Activated CD4-positive, alpha-beta memory T cell treated with anti-CD3 and anti-CD28 coated beads for 36 hours (primary cell): ENCODE measurements at regions of chr22 and their contacts with region 1.

Region 1: GRCh38 chr22:50474668-50475492 is at the start of gene SBF1:
- DNase-seq: peak; percentile 93
- H3K4me3 Mint-ChIP-seq: peak within 1 kb of the TSS; percentile 95
- H3K27ac Mint-ChIP-seq: peak within 1 kb of the TSS; percentile 78
- H3K4me1 Mint-ChIP-seq: peaks cover 47% of the 10 kb centered on the region
- H3K27me3 Mint-ChIP-seq: no peaks in the 10 kb centered on the region
- total RNA-seq, gene SBF1: 110 to 112 TPM

Region 2: GRCh38 chr22:50456466-50457234 is 18.2 kb before region 1 on chr22:
- CTCF ChIA-PET with region 1: interaction called, 12 read pairs
- POLR2A ChIA-PET with region 1: interaction called, 6 read pairs
- intact Hi-C with region 1: loop called (anchors 2 kb)
- DNase-seq: no peak
- H3K4me3 Mint-ChIP-seq: no peak overlapping the region
- H3K27ac Mint-ChIP-seq: no peak overlapping the region
- H3K4me1 Mint-ChIP-seq: peaks cover 13% of the 10 kb centered on the region
- H3K27me3 Mint-ChIP-seq: no peaks in the 10 kb centered on the region

Region 3: DNA sequence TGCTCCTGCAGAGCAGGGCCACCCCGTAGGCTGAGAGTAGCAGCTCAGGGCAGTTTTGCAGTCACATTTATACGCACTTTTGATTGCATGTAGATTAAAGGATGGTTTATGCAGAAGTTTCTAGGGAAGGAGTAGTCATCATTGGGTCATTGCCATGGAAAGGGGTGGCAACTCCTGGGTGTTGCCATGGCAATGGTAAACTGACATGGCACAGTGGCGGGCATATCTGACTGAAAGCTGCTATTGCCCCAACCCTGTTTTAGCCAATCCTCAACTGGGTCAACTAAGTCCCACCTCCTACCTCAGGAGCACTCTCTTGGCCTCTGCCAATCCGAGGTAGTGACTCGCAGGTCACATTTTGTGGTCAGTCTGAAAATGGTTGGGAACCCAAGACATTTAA is 155.5 kb after region 1 on chr22:
- CTCF ChIA-PET with region 1: no interaction called
- POLR2A ChIA-PET with region 1: no interaction called
- intact Hi-C with region 1: no loop called
- DNase-seq: no peak
- H3K4me3 Mint-ChIP-seq: no peak overlapping the region
- H3K27ac Mint-ChIP-seq: no peak overlapping the region
- H3K4me1 Mint-ChIP-seq: peaks cover 19% of the 10 kb centered on the region
- H3K27me3 Mint-ChIP-seq: no peaks in the 10 kb centered on the region